MCF 10A (cell line): ENCODE measurements at regions of chr2 and their contacts with region 1.

Region 1: GRCh38 chr2:55519938-55520885 is 694 bp downstream of the CFAP36 start:
- DNase-seq: peak; percentile 47
- H3K4me3 Mint-ChIP-seq: peak overlapping the region; percentile 96
- H3K27ac Mint-ChIP-seq: peak overlapping the region; percentile 97
- H3K4me1 Mint-ChIP-seq: peaks cover 13% of the 10 kb centered on the region
- H3K27me3 Mint-ChIP-seq: no peaks in the 10 kb centered on the region
- CTCF ChIP-seq: no peak

Region 2: DNA sequence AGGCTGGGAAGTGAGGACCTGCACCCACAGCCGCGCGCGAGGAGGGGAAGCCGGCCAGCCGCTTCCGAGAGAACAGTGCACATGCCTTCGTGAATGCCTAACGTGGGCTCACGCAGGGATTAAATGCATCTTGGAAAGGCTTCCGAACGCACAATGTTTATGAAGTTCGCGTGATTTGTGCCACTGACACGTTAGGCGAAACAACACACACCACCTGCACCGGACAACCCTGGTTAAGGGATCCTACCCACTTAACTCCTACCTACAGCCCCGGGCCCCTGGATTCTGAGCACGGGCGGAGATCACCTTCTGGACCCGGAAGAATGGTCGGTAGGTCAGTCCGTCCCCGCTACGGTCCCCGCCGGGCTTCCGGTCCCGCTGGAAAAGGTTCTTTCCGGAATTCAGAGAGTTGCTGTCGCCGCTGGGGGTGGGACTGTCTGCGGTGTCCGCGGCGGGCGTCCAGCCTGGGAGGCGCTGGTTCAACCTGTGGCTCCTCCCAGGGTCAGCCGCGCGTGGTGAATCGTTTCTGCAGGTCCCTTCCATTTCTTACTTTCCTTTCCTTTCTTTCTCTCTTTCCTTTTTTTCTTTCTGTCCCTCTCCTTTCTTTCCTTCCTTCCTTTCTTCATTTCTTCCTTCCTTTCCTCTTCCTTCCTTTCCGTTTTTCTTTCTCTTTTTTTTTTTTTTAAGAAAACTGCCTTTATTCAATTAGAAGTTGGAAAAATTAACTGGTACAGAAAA is 251.1 kb before region 1 on chr2 and contains the start of gene MTIF2:
- CTCF ChIA-PET with region 1: interaction called, 3 read pairs
- POLR2A ChIA-PET with region 1: interaction called, 10 read pairs
- intact Hi-C with region 1: no loop called
- DNase-seq: peak; percentile 95
- H3K4me3 Mint-ChIP-seq: peak within 1 kb of the TSS; percentile 87
- H3K27ac Mint-ChIP-seq: peak within 1 kb of the TSS; percentile 91
- H3K4me1 Mint-ChIP-seq: peaks cover 5% of the 10 kb centered on the region
- H3K27me3 Mint-ChIP-seq: no peaks in the 10 kb centered on the region
- CTCF ChIP-seq: no peak
- total RNA-seq, gene MTIF2: 58.3 and 60.7 TPM in 2 replicates

Region 3: DNA sequence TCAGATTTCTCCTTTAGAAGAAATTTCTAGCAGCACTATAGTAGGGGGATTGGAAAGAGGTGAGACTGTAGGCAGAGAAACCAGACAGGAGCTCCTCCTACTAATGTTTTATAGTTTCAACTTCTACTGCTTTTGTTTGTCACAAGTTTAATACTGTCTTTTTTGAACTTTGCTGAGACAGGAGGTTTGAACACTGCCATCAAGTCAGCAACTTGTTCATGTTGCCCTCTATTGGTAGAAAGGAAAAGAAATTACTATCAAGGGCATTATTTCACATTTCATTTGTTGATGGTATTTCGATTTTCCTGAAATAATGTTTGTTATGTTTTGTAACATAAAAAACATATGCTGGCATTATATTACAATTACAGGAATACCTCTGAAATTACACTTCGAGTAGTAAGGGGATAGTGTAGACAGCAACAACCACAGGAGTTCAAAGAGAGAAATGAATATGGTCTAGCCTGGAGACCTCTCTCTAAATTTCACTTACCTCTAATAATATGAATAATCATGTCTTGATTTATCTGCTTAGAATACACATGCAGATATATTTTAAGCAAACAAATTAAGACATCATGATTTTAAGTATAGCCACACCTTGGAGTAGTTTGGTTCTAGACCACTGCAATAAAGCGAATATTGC is 88.1 kb before region 1 on chr2:
- CTCF ChIA-PET with region 1: no interaction called
- POLR2A ChIA-PET with region 1: interaction called, 11 read pairs
- intact Hi-C with region 1: no loop called
- DNase-seq: peak; percentile 51
- H3K4me3 Mint-ChIP-seq: no peak overlapping the region
- H3K27ac Mint-ChIP-seq: no peak overlapping the region
- H3K4me1 Mint-ChIP-seq: no peaks in the 10 kb centered on the region
- H3K27me3 Mint-ChIP-seq: no peaks in the 10 kb centered on the region
- CTCF ChIP-seq: peak; percentile 52

Region 4: GRCh38 chr2:55489467-55490062 is 30.6 kb before region 1 on chr2:
- CTCF ChIA-PET with region 1: no interaction called
- POLR2A ChIA-PET with region 1: interaction called, 15 read pairs
- intact Hi-C with region 1: no loop called
- DNase-seq: peak; percentile 67
- H3K4me3 Mint-ChIP-seq: no peak overlapping the region
- H3K27ac Mint-ChIP-seq: no peak overlapping the region
- H3K4me1 Mint-ChIP-seq: peaks cover 13% of the 10 kb centered on the region
- H3K27me3 Mint-ChIP-seq: peaks cover 12% of the 10 kb centered on the region
- CTCF ChIP-seq: no peak

Region 5: GRCh38 chr2:55530539-55531081 is 10.4 kb after region 1 on chr2:
- CTCF ChIA-PET with region 1: interaction called, 4 read pairs
- POLR2A ChIA-PET with region 1: interaction called, 18 read pairs
- intact Hi-C with region 1: no loop called
- DNase-seq: no peak
- H3K4me3 Mint-ChIP-seq: no peak overlapping the region
- H3K27ac Mint-ChIP-seq: no peak overlapping the region
- H3K4me1 Mint-ChIP-seq: no peaks in the 10 kb centered on the region
- H3K27me3 Mint-ChIP-seq: no peaks in the 10 kb centered on the region
- CTCF ChIP-seq: no peak

Region 6: DNA sequence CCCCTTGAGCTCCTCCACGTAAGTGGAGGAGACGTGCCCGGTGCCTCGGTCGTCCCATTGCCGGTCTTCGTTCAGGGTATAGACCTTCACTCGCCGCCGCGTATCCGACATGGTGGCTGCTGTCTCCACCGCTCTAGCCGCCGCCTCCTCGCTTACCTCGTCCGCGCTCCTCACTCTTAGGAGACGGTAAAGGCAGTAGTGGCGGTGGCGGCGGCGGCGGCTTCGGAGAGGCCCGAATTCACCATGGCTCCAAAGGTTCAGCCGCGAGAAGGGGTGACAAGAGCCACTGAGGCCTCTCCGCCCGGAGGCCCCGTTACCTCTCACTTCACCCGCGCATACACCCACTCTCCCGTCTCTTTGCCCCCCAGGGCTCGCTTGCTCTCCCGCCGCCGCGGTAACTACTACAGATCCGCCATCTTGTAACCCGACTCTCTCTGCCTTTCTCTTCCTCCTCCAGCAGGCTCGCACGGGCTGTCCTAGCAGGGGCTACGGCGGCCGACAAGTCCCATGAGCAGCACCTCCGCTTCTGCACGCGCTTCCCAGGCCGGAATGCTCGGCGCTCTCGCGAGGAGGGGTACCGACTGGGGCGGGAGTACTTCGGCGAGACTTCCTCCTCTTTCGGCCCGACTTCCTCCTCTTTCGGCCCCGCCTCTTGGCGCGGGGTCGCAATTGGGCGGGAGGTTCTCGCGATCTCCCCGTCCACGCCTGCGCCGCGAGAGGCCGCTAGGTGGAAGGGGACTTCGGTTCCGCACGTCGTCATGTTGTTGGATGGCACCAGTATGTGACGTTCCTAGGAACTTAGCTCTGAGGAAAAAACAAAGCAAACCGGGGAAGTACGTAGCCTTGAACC is 97.2 kb after region 1 on chr2 and contains the start of gene PPP4R3B:
- CTCF ChIA-PET with region 1: interaction called, 4 read pairs
- POLR2A ChIA-PET with region 1: interaction called, 37 read pairs
- intact Hi-C with region 1: no loop called
- DNase-seq: peak; percentile 99
- H3K4me3 Mint-ChIP-seq: no peak within 1 kb of the TSS
- H3K27ac Mint-ChIP-seq: no peak within 1 kb of the TSS
- H3K4me1 Mint-ChIP-seq: peaks cover 12% of the 10 kb centered on the region
- H3K27me3 Mint-ChIP-seq: no peaks in the 10 kb centered on the region
- CTCF ChIP-seq: peak; percentile 8
- total RNA-seq, gene PPP4R3B: 97.2 and 97.4 TPM in 2 replicates

Region 7: DNA sequence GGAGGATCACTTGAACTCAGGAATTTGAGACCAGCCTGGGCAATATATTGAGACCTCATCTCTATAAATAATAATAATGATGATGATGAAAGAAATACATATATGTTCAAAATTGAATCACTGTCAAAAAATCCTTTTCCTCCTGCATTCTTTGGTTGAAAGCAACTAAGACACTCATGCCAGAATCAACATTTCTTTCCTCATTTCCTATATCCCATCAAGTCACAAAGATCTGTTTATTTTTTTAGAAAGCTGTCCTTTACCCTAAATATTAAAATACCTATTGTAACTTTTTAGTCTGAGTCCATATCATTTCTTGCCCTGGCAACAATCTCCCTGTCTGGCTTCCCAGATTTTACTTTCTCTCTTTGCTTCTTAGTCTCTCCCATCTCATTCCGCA is 129.0 kb after region 1 on chr2:
- CTCF ChIA-PET with region 1: no interaction called
- POLR2A ChIA-PET with region 1: no interaction called
- intact Hi-C with region 1: no loop called
- DNase-seq: no peak
- H3K4me3 Mint-ChIP-seq: no peak overlapping the region
- H3K27ac Mint-ChIP-seq: no peak overlapping the region
- H3K4me1 Mint-ChIP-seq: no peaks in the 10 kb centered on the region
- H3K27me3 Mint-ChIP-seq: no peaks in the 10 kb centered on the region
- CTCF ChIP-seq: no peak

Region 8: DNA sequence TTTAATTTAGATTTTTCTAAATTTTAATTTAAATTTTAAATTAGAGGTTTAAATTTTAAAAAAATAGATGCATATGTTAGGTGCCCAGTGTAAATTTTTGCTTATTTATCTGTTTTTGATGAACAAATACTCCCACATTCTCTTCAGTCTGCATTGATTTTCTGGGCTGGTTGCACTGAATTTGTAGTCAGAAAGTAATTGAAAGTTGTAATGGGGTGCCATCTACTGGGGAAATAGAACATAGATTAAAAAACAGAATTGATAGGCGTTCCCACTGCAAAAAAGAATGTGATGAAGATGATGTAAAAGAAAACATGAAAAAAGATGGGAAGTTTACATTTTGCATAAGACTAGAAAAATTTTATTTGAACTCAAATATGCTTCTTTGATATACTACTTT is 611.9 kb after region 1 on chr2:
- CTCF ChIA-PET with region 1: interaction called, 4 read pairs
- POLR2A ChIA-PET with region 1: no interaction called
- intact Hi-C with region 1: loop called (anchors 5 kb)
- DNase-seq: peak; percentile 66
- H3K4me3 Mint-ChIP-seq: no peak overlapping the region
- H3K27ac Mint-ChIP-seq: no peak overlapping the region
- H3K4me1 Mint-ChIP-seq: no peaks in the 10 kb centered on the region
- H3K27me3 Mint-ChIP-seq: no peaks in the 10 kb centered on the region
- CTCF ChIP-seq: peak; percentile 29